ENCODE measurements at regions of chr6 and their contacts with region 1.

Region 1: DNA sequence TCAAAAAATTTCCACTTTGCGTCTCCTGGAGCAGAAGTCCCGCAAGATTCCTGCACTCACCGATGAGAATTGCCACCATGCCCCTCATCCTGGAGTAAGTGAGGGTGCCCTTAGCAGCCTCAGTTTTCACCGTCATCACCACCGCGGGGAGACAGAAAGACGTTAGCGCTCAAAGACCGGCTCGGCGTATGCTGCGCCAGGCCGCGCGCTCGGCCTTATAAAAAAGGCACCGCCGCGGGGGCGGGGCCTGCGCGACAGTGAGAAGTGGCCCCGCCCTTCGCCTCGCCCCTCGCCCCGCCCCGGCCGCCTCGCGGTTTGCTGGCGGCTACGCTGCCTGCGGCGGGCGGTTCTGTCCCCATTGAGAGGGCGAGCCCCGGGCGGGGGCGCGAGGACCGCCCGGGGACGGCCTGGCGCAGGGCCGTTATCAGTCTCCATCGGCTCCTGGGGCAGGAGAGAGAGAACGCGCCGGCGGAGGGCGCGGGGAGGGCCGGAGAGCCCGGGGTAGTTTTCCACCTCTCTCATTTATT is 122.3 kb upstream of the SLC2A12 start:
- DNase-seq: peak; percentile 88 to 97 (median 94)
- ATAC-seq: peak; percentile 77
- H3K4me3 ChIP-seq: peak overlapping the region; percentile 64 to 87
- H3K4me3 Mint-ChIP-seq: peak overlapping the region; percentile 98
- H3K27ac ChIP-seq: peak overlapping the region; percentile 67 to 79
- H3K27ac Mint-ChIP-seq: peak overlapping the region; percentile 94
- H3K4me1 ChIP-seq: peaks cover 63% of the 10 kb centered on the region
- H3K4me1 Mint-ChIP-seq: peaks cover 71% of the 10 kb centered on the region
- H3K27me3 ChIP-seq: no peaks in the 10 kb centered on the region
- H3K27me3 Mint-ChIP-seq: no peaks in the 10 kb centered on the region
- CTCF ChIP-seq: no peak

Region 2: DNA sequence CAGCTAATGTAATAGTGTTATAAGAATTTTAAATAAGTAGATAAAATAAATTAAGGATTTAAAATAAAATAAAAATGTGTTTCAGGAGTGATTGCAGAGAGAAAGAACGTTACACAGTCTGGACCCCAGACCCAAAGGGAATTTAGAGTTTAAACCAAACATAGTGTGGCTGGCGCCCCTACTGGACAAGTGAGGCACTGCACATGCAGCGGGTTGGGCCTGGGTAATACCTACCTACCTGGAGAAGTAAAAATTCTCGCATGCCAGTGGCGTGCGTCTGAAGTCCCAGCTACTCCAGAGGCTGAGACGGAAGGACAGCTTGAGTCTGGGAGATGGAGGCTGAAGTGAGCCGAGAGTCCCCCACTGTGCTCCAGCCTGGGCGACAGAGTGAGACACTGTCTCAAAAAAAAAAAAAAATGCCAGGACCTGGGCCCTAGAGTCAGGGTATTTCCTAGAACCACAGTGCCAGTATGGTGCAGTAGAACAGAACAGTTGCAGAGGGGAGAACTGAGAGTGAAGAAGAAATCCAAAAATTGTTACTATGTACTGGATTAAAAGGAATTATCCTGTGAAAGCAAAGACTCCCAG is 357.2 kb before region 1 on chr6:
- CTCF ChIA-PET with region 1: no interaction called
- POLR2A ChIA-PET with region 1: no interaction called
- intact Hi-C with region 1: no loop called
- DNase-seq: peak in 6 of 9 experiments; percentile 4 to 38 (median 22)
- ATAC-seq: no peak
- H3K4me3 ChIP-seq: no peak overlapping the region
- H3K4me3 Mint-ChIP-seq: no peak overlapping the region
- H3K27ac ChIP-seq: no peak overlapping the region
- H3K27ac Mint-ChIP-seq: no peak overlapping the region
- H3K4me1 ChIP-seq: no peaks in the 10 kb centered on the region
- H3K4me1 Mint-ChIP-seq: no peaks in the 10 kb centered on the region
- H3K27me3 ChIP-seq: no peaks in the 10 kb centered on the region
- H3K27me3 Mint-ChIP-seq: peaks cover 8% of the 10 kb centered on the region
- CTCF ChIP-seq: peak; percentile 75

Region 3: GRCh38 chr6:134247231-134247833 is 72.6 kb after region 1 on chr6:
- CTCF ChIA-PET with region 1: interaction called, 3 read pairs
- POLR2A ChIA-PET with region 1: no interaction called
- intact Hi-C with region 1: loop called (anchors 1 to 2 kb)
- DNase-seq: peak; percentile 47 to 96 (median 68)
- ATAC-seq: peak; percentile 87
- H3K4me3 ChIP-seq: no peak overlapping the region
- H3K4me3 Mint-ChIP-seq: peak overlapping the region; percentile 54
- H3K27ac ChIP-seq: peak overlapping the region; percentile 20 to 76
- H3K27ac Mint-ChIP-seq: peak overlapping the region; percentile 92
- H3K4me1 ChIP-seq: peaks cover 63% of the 10 kb centered on the region
- H3K4me1 Mint-ChIP-seq: peaks cover 61% of the 10 kb centered on the region
- H3K27me3 ChIP-seq: no peaks in the 10 kb centered on the region
- H3K27me3 Mint-ChIP-seq: no peaks in the 10 kb centered on the region
- CTCF ChIP-seq: no peak

Region 4: GRCh38 chr6:134436281-134436815 is 261.6 kb after region 1 on chr6:
- CTCF ChIA-PET with region 1: interaction called, 5 read pairs
- POLR2A ChIA-PET with region 1: no interaction called
- intact Hi-C with region 1: loop called (anchors 5 kb)
- DNase-seq: peak in 7 of 9 experiments; percentile 13 to 56 (median 50)
- ATAC-seq: peak; percentile 78
- H3K4me3 ChIP-seq: peak overlapping the region in 1 of 2 experiments; percentile 4
- H3K4me3 Mint-ChIP-seq: peak overlapping the region; percentile 63
- H3K27ac ChIP-seq: no peak overlapping the region
- H3K27ac Mint-ChIP-seq: peak overlapping the region; percentile 38
- H3K4me1 ChIP-seq: peaks cover 7% of the 10 kb centered on the region
- H3K4me1 Mint-ChIP-seq: peaks cover 22% of the 10 kb centered on the region
- H3K27me3 ChIP-seq: no peaks in the 10 kb centered on the region
- H3K27me3 Mint-ChIP-seq: no peaks in the 10 kb centered on the region
- CTCF ChIP-seq: no peak

Region 5: DNA sequence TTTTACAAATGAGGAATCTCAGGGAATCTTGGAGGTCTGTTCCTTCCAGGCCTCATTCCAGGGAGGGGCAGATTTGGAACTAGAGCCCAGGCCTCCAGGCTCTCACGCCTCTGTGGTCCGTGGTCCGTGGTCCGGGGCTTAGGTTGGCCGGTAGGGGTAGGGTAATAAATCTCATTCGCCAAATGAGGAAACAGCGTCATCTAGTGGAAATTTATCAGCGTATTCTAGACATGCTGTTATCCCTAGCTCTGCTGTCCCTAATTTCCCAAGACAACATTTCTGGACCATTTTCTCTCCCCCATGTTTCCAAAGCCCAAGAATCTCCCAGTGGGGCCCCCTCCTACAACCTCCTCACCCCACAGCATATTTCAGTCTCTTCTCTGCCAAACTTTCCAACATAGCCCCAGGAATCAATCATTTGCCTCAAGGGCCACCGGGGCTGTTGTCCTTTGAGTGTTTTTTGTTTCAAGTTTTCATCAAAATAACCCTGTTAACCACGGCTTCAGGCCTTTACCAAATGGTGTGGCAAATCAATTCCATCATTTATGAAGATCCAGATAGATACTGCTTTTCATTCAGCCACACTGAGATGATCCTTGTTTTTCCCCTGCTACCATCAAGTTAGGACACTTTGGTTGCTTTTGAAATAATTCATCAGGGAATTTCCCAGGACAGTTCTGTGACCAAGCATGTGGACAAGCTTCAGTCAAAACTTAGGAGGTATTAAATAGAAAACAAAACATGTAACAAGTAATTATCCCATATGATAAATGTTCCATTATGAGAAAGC is 648.4 kb after region 1 on chr6:
- CTCF ChIA-PET with region 1: interaction called, 15 read pairs
- POLR2A ChIA-PET with region 1: no interaction called
- intact Hi-C with region 1: loop called (anchors 1 kb)
- DNase-seq: peak in 4 of 9 experiments; percentile 22 to 74 (median 58)
- ATAC-seq: peak; percentile 61
- H3K4me3 ChIP-seq: no peak overlapping the region
- H3K4me3 Mint-ChIP-seq: no peak overlapping the region
- H3K27ac ChIP-seq: no peak overlapping the region
- H3K27ac Mint-ChIP-seq: no peak overlapping the region
- H3K4me1 ChIP-seq: no peaks in the 10 kb centered on the region
- H3K4me1 Mint-ChIP-seq: peaks cover 4% of the 10 kb centered on the region
- H3K27me3 ChIP-seq: no peaks in the 10 kb centered on the region
- H3K27me3 Mint-ChIP-seq: peaks cover 6% of the 10 kb centered on the region
- CTCF ChIP-seq: peak; percentile 76

Region 6: DNA sequence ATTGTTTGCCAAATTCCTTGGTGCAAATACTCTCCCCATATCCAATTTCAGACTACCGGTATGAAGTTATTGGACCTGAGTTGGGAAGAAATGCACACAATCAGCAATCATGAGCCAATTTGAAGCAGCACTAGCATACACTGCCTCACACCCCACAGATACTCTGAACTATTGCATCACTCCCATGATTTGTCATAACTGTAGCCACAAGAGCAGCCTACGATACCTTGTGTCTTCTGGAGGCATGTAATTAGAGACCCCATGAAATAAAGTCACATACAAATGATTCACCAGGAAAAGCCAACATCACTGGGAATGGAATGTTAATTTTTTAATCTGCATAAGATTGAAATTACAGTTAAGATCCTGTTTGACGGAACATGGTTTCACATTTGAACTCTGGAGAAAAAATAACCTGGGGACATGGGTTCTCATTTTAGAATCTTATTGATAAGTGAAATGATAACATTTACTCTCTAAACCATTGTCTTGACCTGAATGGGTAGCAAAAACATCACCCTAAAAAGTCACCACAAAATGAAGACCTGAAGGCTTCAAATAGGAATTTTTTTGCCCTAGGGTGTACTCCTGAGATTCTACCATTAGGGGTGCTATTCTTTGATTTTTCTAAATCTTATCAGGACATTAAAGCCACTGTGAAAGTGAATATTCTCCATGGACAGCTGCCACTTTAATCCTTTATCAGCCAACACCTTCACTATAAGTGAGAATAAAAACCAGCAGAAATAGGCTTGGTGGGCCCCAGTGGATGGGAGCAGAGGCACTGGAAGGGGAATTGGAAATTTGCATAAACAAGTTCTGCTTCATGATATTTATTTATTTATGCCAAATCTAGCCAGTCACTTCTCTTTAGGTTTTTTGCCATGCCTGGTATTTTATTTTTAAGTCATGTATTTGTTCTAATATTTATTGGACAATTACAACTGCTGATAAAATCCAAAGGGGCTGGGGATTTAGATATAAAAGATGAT is 914.4 kb after region 1 on chr6:
- CTCF ChIA-PET with region 1: no interaction called
- POLR2A ChIA-PET with region 1: no interaction called
- intact Hi-C with region 1: loop called (anchors 10 kb)
- DNase-seq: peak in 3 of 9 experiments; percentile 22 to 64 (median 57)
- ATAC-seq: peak; percentile 67
- H3K4me3 ChIP-seq: peak overlapping the region in 1 of 2 experiments; percentile 48
- H3K4me3 Mint-ChIP-seq: peak overlapping the region; percentile 73
- H3K27ac ChIP-seq: no peak overlapping the region
- H3K27ac Mint-ChIP-seq: peak overlapping the region; percentile 87
- H3K4me1 ChIP-seq: peaks cover 70% of the 10 kb centered on the region
- H3K4me1 Mint-ChIP-seq: peaks cover 79% of the 10 kb centered on the region
- H3K27me3 ChIP-seq: no peaks in the 10 kb centered on the region
- H3K27me3 Mint-ChIP-seq: no peaks in the 10 kb centered on the region
- CTCF ChIP-seq: peak; percentile 58

Measured in CD8-positive, alpha-beta T cell (primary cell).